ENCODE measurements at regions of chr19 and their contacts with region 1.

Region 1: DNA sequence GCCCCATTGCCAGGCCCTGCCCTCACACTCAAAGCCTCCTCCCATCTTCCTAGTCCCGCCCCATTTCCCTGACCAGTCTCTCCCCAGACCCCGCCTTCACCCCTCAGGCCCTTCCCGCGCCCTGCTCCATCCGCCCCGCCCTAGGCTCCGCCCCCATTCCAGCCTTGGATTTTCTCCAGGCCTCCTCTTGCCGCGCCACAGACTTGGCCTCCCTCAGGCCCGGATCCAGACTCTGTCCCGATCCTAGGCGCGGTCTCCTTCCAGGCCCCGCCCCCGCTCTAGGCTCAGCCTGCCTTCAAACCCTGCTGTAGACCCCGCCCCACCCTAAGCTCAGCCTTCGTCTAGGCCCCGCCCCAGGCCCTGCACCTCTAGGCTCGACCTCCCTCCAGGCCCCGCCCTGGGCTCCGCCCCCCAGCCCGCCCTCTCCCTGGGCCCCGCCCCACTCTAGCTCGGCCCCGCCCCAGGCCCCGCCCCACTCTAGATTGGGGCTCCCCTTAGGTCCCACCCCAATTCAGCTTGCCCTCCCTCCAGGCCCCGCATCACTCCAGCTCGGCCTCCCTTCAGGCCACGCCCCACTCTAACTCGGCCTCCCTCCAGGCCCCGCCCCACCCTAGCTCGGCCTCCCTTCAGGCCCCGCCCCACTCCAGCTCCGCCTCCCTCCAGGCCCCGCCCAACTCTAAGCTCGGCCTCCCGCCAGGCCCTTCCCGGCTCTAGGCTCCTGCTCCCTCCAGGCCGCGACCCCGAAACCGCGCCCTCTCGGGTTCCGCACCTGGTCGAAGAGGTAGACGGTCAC is 18.5 kb downstream of the LMTK3 start:
- DNase-seq: peak; percentile 95 to 99
- H3K4me3 ChIP-seq: peak overlapping the region; percentile 77; the same call in 1 of the 2 replicates
- H3K27ac ChIP-seq: peak overlapping the region; percentile 62
- H3K4me1 ChIP-seq: peaks cover 39% of the 10 kb centered on the region
- H3K27me3 ChIP-seq: no peaks in the 10 kb centered on the region
- CTCF ChIP-seq: no peak

Region 2: GRCh38 chr19:47644762-47645482 is 848.2 kb before region 1 on chr19:
- CTCF ChIA-PET with region 1: no interaction called
- POLR2A ChIA-PET with region 1: interaction called, 12 read pairs
- intact Hi-C with region 1: no loop called
- DNase-seq: no peak
- H3K4me3 ChIP-seq: no peak overlapping the region
- H3K27ac ChIP-seq: 0 out of 2 replicates have a peak overlapping the region, but pooled peaks have one; percentile 15
- H3K4me1 ChIP-seq: peaks cover 50% of the 10 kb centered on the region
- H3K27me3 ChIP-seq: no peaks in the 10 kb centered on the region
- CTCF ChIP-seq: no peak

Region 3: DNA sequence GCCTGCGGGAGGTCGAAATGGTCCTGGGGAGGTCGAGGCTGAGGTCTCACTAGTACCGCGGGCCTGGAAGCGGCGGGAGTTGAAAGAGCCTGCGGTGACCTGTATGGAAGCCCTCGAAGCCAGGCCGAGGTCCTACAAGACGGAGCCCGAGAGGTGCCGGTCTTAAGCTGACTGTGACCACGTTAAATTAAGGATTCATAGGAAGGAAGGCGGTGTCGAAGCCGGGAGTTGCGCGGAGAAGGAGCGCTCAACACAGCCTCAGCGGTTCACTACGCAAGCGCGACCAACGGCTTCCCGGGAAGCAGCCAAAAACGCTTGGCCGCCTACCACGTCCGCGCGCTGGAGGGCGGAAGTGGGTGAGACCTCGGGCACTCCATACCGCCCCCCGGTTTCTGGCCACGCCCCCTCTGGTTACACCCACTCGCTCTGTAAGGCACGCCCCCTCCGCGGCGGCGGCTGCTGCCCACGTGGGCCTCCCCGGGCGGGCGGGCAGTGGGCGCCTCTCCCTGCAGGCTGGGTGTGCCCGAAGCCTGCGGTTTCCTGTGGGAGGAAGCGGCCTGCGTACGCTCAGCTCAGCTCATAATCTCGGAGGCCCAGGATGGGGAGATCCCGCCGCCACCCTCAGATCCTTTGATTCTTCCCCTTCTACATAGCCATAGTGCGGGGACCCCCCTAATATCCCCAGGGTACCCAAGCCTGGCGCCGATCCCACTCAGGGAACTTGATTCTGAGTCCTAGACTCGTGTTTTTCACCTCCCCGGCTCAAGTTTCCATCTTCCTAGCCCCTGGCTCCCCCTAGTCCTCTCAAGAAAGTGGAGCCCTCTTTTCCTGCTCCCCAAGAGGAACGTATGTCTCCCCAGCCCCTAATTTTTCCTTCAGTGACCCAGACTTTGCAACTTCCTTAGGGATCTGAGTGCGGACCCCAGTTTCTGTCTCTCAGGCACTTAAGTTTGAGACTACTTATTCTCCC is 171.2 kb before region 1 on chr19:
- CTCF ChIA-PET with region 1: interaction called, 5 read pairs
- POLR2A ChIA-PET with region 1: interaction called, 27 read pairs
- intact Hi-C with region 1: loop called (anchors 2 kb)
- DNase-seq: peak; percentile 91 to 100
- H3K4me3 ChIP-seq: peak overlapping the region; percentile 83
- H3K27ac ChIP-seq: peak overlapping the region; percentile 90
- H3K4me1 ChIP-seq: peaks cover 53% of the 10 kb centered on the region
- H3K27me3 ChIP-seq: no peaks in the 10 kb centered on the region
- CTCF ChIP-seq: 0 out of 2 replicates have a peak, but pooled peaks have one; percentile 32

Region 4: GRCh38 chr19:48391107-48391986 is 101.8 kb before region 1 on chr19 and contains the start of gene KDELR1:
- CTCF ChIA-PET with region 1: interaction called, 17 read pairs
- POLR2A ChIA-PET with region 1: interaction called, 8 read pairs
- intact Hi-C with region 1: loop called (anchors 5 kb)
- DNase-seq: peak in 1 of 2 experiments; percentile 82
- H3K4me3 ChIP-seq: peak within 1 kb of the TSS; percentile 91
- H3K27ac ChIP-seq: peak within 1 kb of the TSS; percentile 58
- H3K4me1 ChIP-seq: no peaks in the 10 kb centered on the region
- H3K27me3 ChIP-seq: peaks cover 11% of the 10 kb centered on the region
- CTCF ChIP-seq: peak; percentile 95
- total RNA-seq, gene KDELR1: 220 and 261 TPM in 2 replicates

Region 5: GRCh38 chr19:48553676-48554386 is 60.7 kb after region 1 on chr19:
- CTCF ChIA-PET with region 1: no interaction called
- POLR2A ChIA-PET with region 1: interaction called, 24 read pairs
- intact Hi-C with region 1: no loop called
- DNase-seq: peak; percentile 85 to 89
- H3K4me3 ChIP-seq: peak overlapping the region; percentile 5; the same call in 1 of the 2 replicates
- H3K27ac ChIP-seq: peak overlapping the region; percentile 49
- H3K4me1 ChIP-seq: peaks cover 59% of the 10 kb centered on the region
- H3K27me3 ChIP-seq: no peaks in the 10 kb centered on the region
- CTCF ChIP-seq: no peak

Region 6: DNA sequence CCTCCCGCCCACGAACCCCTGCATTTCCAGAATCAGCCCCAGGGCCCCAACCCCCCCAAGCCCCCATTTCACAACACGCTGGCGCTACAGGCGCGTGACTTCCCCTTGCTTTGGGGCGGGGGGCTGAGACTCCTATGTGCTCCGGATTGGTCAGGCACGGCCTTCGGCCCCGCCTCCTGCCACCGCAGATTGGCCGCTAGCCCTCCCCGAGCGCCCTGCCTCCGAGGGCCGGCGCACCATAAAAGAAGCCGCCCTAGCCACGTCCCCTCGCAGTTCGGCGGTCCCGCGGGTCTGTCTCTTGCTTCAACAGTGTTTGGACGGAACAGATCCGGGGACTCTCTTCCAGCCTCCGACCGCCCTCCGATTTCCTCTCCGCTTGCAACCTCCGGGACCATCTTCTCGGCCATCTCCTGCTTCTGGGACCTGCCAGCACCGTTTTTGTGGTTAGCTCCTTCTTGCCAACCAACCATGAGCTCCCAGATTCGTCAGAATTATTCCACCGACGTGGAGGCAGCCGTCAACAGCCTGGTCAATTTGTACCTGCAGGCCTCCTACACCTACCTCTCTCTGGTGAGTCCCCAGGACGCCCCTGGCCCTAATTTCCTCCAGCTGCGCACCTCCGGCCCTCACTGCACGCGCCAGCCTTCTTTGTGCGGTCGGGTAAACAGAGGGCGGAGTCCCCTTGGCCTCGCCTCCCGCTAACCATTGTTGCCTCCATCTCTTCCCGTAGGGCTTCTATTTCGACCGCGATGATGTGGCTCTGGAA is 472.1 kb after region 1 on chr19 and contains the start of gene FTL:
- CTCF ChIA-PET with region 1: no interaction called
- POLR2A ChIA-PET with region 1: no interaction called
- intact Hi-C with region 1: loop called (anchors 10 kb)
- DNase-seq: peak; percentile 92 to 99
- H3K4me3 ChIP-seq: peak within 1 kb of the TSS; percentile 84
- H3K27ac ChIP-seq: peak within 1 kb of the TSS; percentile 95
- H3K4me1 ChIP-seq: peaks cover 39% of the 10 kb centered on the region
- H3K27me3 ChIP-seq: no peaks in the 10 kb centered on the region
- CTCF ChIP-seq: no peak
- total RNA-seq, gene FTL: 3,402 and 3,822 TPM in 2 replicates